WTC11 (cell line): ENCODE measurements at regions of chr5 and their contacts with region 1.

Region 1: GRCh38 chr5:66144074-66144833 is at the start of gene SREK1:
- DNase-seq: peak; percentile 94
- ATAC-seq: peak; percentile 91
- H3K4me3 Mint-ChIP-seq: peak within 1 kb of the TSS; percentile 95
- H3K27ac Mint-ChIP-seq: peak within 1 kb of the TSS; percentile 100
- H3K4me1 Mint-ChIP-seq: peaks cover 20% of the 10 kb centered on the region
- H3K27me3 Mint-ChIP-seq: no peaks in the 10 kb centered on the region
- CTCF ChIP-seq: no peak
- total RNA-seq, gene SREK1: 34.2 to 38.4 TPM (median 34.6 TPM) in 3 replicates

Region 2: GRCh38 chr5:65925601-65926275 is 218.5 kb before region 1 on chr5:
- CTCF ChIA-PET with region 1: no interaction called
- POLR2A ChIA-PET with region 1: interaction called, 15 read pairs
- DNase-seq: peak; percentile 84
- ATAC-seq: peak; percentile 84
- H3K4me3 Mint-ChIP-seq: peak overlapping the region; percentile 85
- H3K27ac Mint-ChIP-seq: peak overlapping the region; percentile 90
- H3K4me1 Mint-ChIP-seq: peaks cover 36% of the 10 kb centered on the region
- H3K27me3 Mint-ChIP-seq: peaks cover 20% of the 10 kb centered on the region
- CTCF ChIP-seq: no peak

Region 3: GRCh38 chr5:66129144-66129543 is 15.1 kb before region 1 on chr5:
- CTCF ChIA-PET with region 1: no interaction called
- POLR2A ChIA-PET with region 1: no interaction called
- DNase-seq: no peak
- ATAC-seq: no peak
- H3K4me3 Mint-ChIP-seq: no peak overlapping the region
- H3K27ac Mint-ChIP-seq: no peak overlapping the region
- H3K4me1 Mint-ChIP-seq: no peaks in the 10 kb centered on the region
- H3K27me3 Mint-ChIP-seq: peaks cover 4% of the 10 kb centered on the region; the same call in 1 of the 2 replicates
- CTCF ChIP-seq: no peak

Region 4: DNA sequence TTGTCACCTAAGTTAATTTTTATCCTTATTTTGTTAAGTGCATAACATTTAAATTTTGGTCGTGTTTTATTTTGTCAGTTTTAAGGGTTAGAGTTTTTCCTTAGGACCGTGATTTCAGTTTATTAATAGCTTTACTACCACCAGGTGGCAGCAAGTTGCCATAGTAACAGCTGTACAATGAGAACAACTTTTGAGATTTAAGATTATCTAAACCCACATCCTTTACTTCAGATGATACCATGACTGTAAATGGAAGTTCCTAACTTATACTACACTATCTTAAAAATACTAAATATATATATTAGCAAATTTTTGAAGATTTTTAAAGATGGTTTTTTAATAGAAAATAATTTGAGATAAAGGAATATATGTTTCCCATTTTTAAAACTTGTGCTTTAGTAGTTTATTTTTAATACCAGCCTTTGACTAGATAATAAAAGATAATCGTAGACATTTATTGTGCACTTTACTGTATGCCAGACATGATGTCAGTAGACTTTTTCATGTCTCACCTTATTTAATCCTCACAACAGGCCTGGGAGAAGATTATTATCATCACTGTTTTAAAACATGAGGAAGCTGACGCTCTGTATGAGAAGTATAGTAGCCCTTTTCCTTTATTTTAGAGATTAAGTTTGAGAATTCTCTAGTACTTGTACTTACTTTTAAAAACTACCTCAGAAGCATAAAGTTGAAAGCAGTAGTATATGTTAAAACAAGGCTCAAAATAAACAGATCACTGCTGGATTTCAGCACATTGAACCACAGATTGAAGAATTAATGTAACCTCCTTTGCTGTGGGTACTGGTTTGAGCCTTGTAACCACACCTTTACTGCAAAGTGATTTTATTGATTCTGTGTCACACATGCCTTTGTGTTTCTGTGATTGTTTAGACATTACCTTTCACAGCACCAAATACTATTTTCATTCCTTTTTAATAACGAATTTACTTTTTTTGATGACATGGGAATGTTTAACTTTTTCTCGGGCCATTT is 27.4 kb after region 1 on chr5:
- CTCF ChIA-PET with region 1: no interaction called
- POLR2A ChIA-PET with region 1: no interaction called
- DNase-seq: no peak
- ATAC-seq: no peak
- H3K4me3 Mint-ChIP-seq: no peak overlapping the region
- H3K27ac Mint-ChIP-seq: no peak overlapping the region
- H3K4me1 Mint-ChIP-seq: no peaks in the 10 kb centered on the region
- H3K27me3 Mint-ChIP-seq: no peaks in the 10 kb centered on the region
- CTCF ChIP-seq: 0 out of 2 replicates have a peak, but pooled peaks have one; percentile 12

Region 5: GRCh38 chr5:66197771-66198405 is 53.6 kb after region 1 on chr5:
- CTCF ChIA-PET with region 1: no interaction called
- POLR2A ChIA-PET with region 1: no interaction called
- DNase-seq: no peak
- ATAC-seq: no peak
- H3K4me3 Mint-ChIP-seq: no peak overlapping the region
- H3K27ac Mint-ChIP-seq: no peak overlapping the region
- H3K4me1 Mint-ChIP-seq: peaks cover 24% of the 10 kb centered on the region; the same call in 1 of the 2 replicates
- H3K27me3 Mint-ChIP-seq: no peaks in the 10 kb centered on the region; the same call in 1 of the 2 replicates
- CTCF ChIP-seq: no peak